ENCODE measurements at regions of chr2 and their contacts with region 1.

Region 1: GRCh38 chr2:201950606-201951005 is 83.0 kb upstream of the FZD7 start:
- DNase-seq: no peak
- H3K4me3 ChIP-seq: no peak overlapping the region
- H3K27ac ChIP-seq: no peak overlapping the region
- H3K4me1 ChIP-seq: peaks cover 8 to 43% (median 27%) of the 10 kb centered on the region in 4 experiments
- H3K27me3 ChIP-seq: no peaks in the 10 kb centered on the region
- CTCF ChIP-seq: no peak
- EP300 ChIP-seq: no peak
- POLR2A ChIP-seq: no peak
- RAD21 ChIP-seq: no peak

Region 2: GRCh38 chr2:201938149-201938785 is 12.3 kb before region 1 on chr2:
- CTCF ChIA-PET with region 1: interaction called, 3 read pairs
- POLR2A ChIA-PET with region 1: interaction called, 17 read pairs
- DNase-seq: peak in 1 of 2 experiments; percentile 46
- H3K4me3 ChIP-seq: no peak overlapping the region
- H3K27ac ChIP-seq: no peak overlapping the region
- H3K4me1 ChIP-seq: peaks cover 0 to 11% (median 7%) of the 10 kb centered on the region in 4 experiments; a peak in 4 of 7 replicates
- H3K27me3 ChIP-seq: no peaks in the 10 kb centered on the region
- CTCF ChIP-seq: no peak
- EP300 ChIP-seq: no peak
- POLR2A ChIP-seq: no peak
- RAD21 ChIP-seq: no peak

Region 3: GRCh38 chr2:201978986-201979385 is 28.4 kb after region 1 on chr2:
- CTCF ChIA-PET with region 1: interaction called, 4 read pairs
- POLR2A ChIA-PET with region 1: interaction called, 186 read pairs
- DNase-seq: no peak
- H3K4me3 ChIP-seq: no peak overlapping the region
- H3K27ac ChIP-seq: no peak overlapping the region
- H3K4me1 ChIP-seq: peaks cover 8 to 23% (median 17%) of the 10 kb centered on the region in 4 experiments; a peak in 6 of 7 replicates
- H3K27me3 ChIP-seq: no peaks in the 10 kb centered on the region
- CTCF ChIP-seq: no peak
- EP300 ChIP-seq: no peak
- POLR2A ChIP-seq: no peak
- RAD21 ChIP-seq: no peak

Region 4: GRCh38 chr2:202043475-202043874 is 92.9 kb after region 1 on chr2:
- CTCF ChIA-PET with region 1: no interaction called
- POLR2A ChIA-PET with region 1: no interaction called
- DNase-seq: no peak
- H3K4me3 ChIP-seq: no peak overlapping the region
- H3K27ac ChIP-seq: no peak overlapping the region
- H3K4me1 ChIP-seq: peaks cover 0 to 10% (median 5%) of the 10 kb centered on the region in 4 experiments; a peak in 4 of 7 replicates
- H3K27me3 ChIP-seq: no peaks in the 10 kb centered on the region
- CTCF ChIP-seq: no peak
- EP300 ChIP-seq: no peak
- POLR2A ChIP-seq: no peak
- RAD21 ChIP-seq: no peak